ENCODE measurements at regions of chr14 and their contacts with region 1.

Region 1: GRCh38 chr14:96424109-96424989 is 32.4 kb downstream of the AK7 start:
- DNase-seq: peak; percentile 72

Region 2: DNA sequence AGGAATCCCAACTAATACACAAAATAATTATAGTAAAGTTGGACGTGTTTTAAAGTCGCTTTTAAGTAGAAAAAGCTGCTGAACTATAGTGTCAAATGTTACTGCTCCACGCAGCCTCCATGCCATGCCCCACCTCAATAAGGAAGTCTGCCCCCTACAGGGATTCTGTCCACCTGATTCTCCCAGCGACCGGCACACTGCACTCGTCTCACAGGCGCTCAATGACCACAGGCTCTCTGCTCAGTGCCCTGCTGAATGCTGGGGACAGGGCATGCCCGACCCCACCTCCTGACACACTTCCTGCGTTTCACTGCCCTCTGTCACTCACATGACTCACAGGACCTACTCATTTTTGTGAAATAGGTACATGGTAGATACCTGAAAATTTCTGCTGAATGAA is 119.4 kb before region 1 on chr14:
- in situ Hi-C with region 1: loop called (anchors 25 kb)
- DNase-seq: peak; percentile 6

Measured in ACHN (cell line).